ENCODE measurements at regions of chr18 and their contacts with region 1.

Region 1: GRCh38 chr18:60554967-60555366 is 182.4 kb upstream of the MC4R start:
- DNase-seq: no peak
- ATAC-seq: no peak
- H3K4me3 ChIP-seq: no peak overlapping the region
- H3K27ac ChIP-seq: no peak overlapping the region
- H3K4me1 ChIP-seq: no peaks in the 10 kb centered on the region
- H3K27me3 ChIP-seq: no peaks in the 10 kb centered on the region
- CTCF ChIP-seq: no peak
- POLR2A ChIP-seq: no peak

Region 2: DNA sequence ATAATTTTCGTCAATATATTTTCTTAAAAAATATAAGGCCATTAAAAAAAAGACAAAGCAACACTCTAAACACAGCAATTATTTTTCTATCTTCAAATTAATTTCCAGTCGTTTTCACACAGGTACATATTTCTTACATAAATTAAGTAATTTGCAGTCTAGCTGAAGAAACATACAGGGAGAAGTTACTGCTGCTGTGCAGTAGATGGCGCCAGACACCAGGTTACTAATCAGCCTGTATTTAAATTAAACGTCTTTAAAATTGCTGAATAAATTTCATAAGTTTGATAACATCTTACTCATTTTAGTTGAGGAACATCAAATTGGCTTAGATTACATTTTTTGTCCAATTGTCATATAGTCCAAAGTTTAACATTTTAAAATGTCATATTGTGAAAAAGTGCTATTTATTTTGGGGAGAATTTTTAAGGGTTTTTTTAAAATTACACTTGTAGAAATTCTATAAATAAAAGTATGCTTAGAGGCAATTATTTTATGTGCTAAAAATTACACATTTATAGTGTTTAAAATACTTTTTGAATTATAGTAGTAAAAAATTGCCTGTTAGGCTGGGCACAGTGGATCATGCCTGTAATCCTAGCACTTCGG is 566.8 kb before region 1 on chr18:
- intact Hi-C with region 1: loop called (anchors 10 kb)
- DNase-seq: peak; percentile 29 to 43 (median 38)
- ATAC-seq: peak; percentile 38
- H3K4me3 ChIP-seq: no peak overlapping the region
- H3K27ac ChIP-seq: no peak overlapping the region
- H3K4me1 ChIP-seq: no peaks in the 10 kb centered on the region
- H3K27me3 ChIP-seq: peaks cover 0 to 4% of the 10 kb centered on the region in 2 donors
- CTCF ChIP-seq: peak in 6 of 7 experiments; percentile 76 to 92 (median 78)
- POLR2A ChIP-seq: no peak

Region 3: GRCh38 chr18:60506682-60507081 is 48.3 kb before region 1 on chr18:
- intact Hi-C with region 1: no loop called
- DNase-seq: no peak
- ATAC-seq: no peak
- H3K4me3 ChIP-seq: no peak overlapping the region
- H3K27ac ChIP-seq: no peak overlapping the region
- H3K4me1 ChIP-seq: no peaks in the 10 kb centered on the region
- H3K27me3 ChIP-seq: no peaks in the 10 kb centered on the region
- CTCF ChIP-seq: no peak
- POLR2A ChIP-seq: no peak